Endothelial cell of umbilical vein (primary cell): ENCODE measurements at regions of chr2 and their contacts with region 1.

Region 1: GRCh38 chr2:38274286-38275276 is 102.5 kb downstream of the ATL2 start:
- DNase-seq: peak; percentile 77
- H3K4me3 ChIP-seq: no peak overlapping the region
- H3K27ac ChIP-seq: no peak overlapping the region
- H3K4me1 ChIP-seq: no peaks in the 10 kb centered on the region
- H3K27me3 ChIP-seq: no peaks in the 10 kb centered on the region
- CTCF ChIP-seq: peak; percentile 34 to 39
- POLR2A ChIP-seq: no peak

Region 2: DNA sequence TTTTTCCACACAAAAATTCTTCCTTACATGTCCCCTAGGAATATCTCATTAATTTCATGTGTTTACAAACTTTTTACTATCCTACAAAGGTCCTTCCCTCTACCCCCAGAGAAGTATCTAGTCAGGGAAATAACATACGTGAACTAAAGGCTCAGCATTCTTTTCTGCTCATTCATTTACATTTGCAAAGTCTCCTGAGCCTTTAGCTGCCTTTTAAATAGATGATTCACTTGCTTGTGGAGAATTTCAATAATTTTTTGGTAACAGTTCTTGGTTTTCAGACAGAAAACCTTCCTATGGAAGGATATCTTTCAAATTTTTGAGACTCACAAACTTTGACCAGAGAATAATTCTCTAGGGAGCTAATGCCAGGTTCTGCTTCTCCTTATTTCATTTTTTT is 431.0 kb before region 1 on chr2:
- CTCF ChIA-PET with region 1: no interaction called
- POLR2A ChIA-PET with region 1: no interaction called
- dilution Hi-C with region 1: no loop called
- intact Hi-C with region 1: no loop called
- DNase-seq: no peak
- H3K4me3 ChIP-seq: no peak overlapping the region
- H3K27ac ChIP-seq: no peak overlapping the region
- H3K4me1 ChIP-seq: no peaks in the 10 kb centered on the region
- H3K27me3 ChIP-seq: no peaks in the 10 kb centered on the region
- CTCF ChIP-seq: no peak
- POLR2A ChIP-seq: no peak

Region 3: GRCh38 chr2:37890893-37891495 is 383.6 kb before region 1 on chr2:
- CTCF ChIA-PET with region 1: interaction called, 11 read pairs
- POLR2A ChIA-PET with region 1: no interaction called
- dilution Hi-C with region 1: no loop called
- intact Hi-C with region 1: loop called (anchors 2 kb)
- DNase-seq: peak; percentile 69
- H3K4me3 ChIP-seq: no peak overlapping the region
- H3K27ac ChIP-seq: no peak overlapping the region
- H3K4me1 ChIP-seq: no peaks in the 10 kb centered on the region
- H3K27me3 ChIP-seq: no peaks in the 10 kb centered on the region
- CTCF ChIP-seq: peak; percentile 76 to 79
- POLR2A ChIP-seq: no peak

Region 4: GRCh38 chr2:37982147-37982582 is 292.4 kb before region 1 on chr2:
- CTCF ChIA-PET with region 1: interaction called, 78 read pairs
- POLR2A ChIA-PET with region 1: no interaction called
- dilution Hi-C with region 1: no loop called
- intact Hi-C with region 1: loop called (anchors 1 kb)
- DNase-seq: peak; percentile 60
- H3K4me3 ChIP-seq: no peak overlapping the region
- H3K27ac ChIP-seq: no peak overlapping the region
- H3K4me1 ChIP-seq: no peaks in the 10 kb centered on the region
- H3K27me3 ChIP-seq: no peaks in the 10 kb centered on the region
- CTCF ChIP-seq: peak; percentile 71 to 80
- POLR2A ChIP-seq: no peak

Region 5: DNA sequence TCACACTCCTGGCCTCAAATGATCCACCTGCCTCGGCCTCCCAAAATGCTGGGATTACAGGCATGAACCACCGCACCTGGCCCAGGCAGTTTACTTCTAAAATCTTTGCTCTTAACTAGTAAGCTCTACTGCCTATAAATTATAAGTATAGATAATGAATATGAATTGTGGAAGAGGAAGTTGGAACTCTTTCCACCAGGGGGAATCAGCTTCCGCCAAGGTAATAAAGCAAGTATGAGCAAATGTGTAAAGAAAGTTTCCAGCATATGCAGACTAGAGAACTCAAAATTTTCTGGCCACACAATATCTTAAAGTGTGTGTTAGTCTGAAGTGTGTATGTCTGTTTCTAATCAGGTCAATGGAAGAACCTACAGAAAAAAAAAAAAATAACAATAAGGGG is 281.4 kb before region 1 on chr2:
- CTCF ChIA-PET with region 1: interaction called, 17 read pairs
- POLR2A ChIA-PET with region 1: no interaction called
- dilution Hi-C with region 1: no loop called
- intact Hi-C with region 1: no loop called
- DNase-seq: no peak
- H3K4me3 ChIP-seq: no peak overlapping the region
- H3K27ac ChIP-seq: no peak overlapping the region
- H3K4me1 ChIP-seq: no peaks in the 10 kb centered on the region
- H3K27me3 ChIP-seq: no peaks in the 10 kb centered on the region
- CTCF ChIP-seq: no peak
- POLR2A ChIP-seq: no peak

Region 6: GRCh38 chr2:38076606-38077430 is 197.8 kb before region 1 on chr2:
- CTCF ChIA-PET with region 1: interaction called, 5 read pairs
- POLR2A ChIA-PET with region 1: no interaction called
- dilution Hi-C with region 1: no loop called
- intact Hi-C with region 1: loop called (anchors 10 kb)
- DNase-seq: no peak
- H3K4me3 ChIP-seq: peak overlapping the region; percentile 30 to 34 (median 32)
- H3K27ac ChIP-seq: no peak overlapping the region
- H3K4me1 ChIP-seq: peaks cover 16% of the 10 kb centered on the region
- H3K27me3 ChIP-seq: peaks cover 44 to 51% of the 10 kb centered on the region in 2 experiments
- CTCF ChIP-seq: peak in 1 of 2 donors; percentile 23
- POLR2A ChIP-seq: no peak

Region 7: DNA sequence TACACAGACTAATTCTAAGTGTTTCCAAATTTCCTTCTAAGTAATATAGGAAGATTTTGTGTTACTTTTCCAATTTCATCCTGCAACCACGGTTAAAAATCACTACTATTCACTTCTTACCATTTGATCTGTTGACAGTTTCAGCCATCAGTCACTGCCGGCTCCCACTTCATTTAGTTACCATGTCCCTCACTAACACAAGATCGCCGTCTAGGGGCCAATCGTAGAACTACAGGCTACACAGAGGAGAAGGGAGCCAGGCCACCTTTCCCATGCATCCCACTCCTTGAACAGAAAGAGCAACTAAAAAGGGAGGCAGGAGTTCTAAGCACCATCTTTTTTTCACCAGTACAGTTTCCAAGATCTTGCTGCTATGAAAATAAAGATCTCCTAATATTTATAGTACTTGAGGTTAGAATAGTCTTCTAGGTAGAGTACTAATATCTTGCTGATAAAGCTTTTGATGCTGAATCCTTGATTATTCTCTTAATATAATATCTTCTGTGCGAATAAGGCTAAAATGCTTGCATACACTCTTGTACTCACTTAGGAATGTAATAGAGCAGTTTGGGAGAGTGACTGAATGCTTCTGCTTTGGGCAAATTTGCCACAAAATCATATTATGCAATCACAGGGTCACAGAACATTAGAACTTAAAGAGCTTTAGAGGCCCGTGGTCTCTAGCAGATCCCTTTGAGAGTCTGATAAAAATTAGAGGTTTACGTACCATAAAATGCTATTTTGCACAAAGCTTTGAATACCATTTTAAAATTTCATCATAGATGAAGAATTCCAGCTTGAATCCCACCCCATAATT is 159.2 kb before region 1 on chr2:
- CTCF ChIA-PET with region 1: interaction called, 8 read pairs
- POLR2A ChIA-PET with region 1: no interaction called
- dilution Hi-C with region 1: no loop called
- intact Hi-C with region 1: loop called (anchors 1 kb)
- DNase-seq: peak; percentile 73
- H3K4me3 ChIP-seq: no peak overlapping the region
- H3K27ac ChIP-seq: no peak overlapping the region
- H3K4me1 ChIP-seq: no peaks in the 10 kb centered on the region
- H3K27me3 ChIP-seq: peaks cover 0 to 10% of the 10 kb centered on the region in 2 experiments
- CTCF ChIP-seq: peak; percentile 91 to 98
- POLR2A ChIP-seq: no peak

Region 8: GRCh38 chr2:38293152-38293865 is 18.7 kb after region 1 on chr2:
- CTCF ChIA-PET with region 1: interaction called, 13 read pairs
- POLR2A ChIA-PET with region 1: no interaction called
- dilution Hi-C with region 1: no loop called
- intact Hi-C with region 1: no loop called
- DNase-seq: no peak
- H3K4me3 ChIP-seq: no peak overlapping the region
- H3K27ac ChIP-seq: no peak overlapping the region
- H3K4me1 ChIP-seq: no peaks in the 10 kb centered on the region
- H3K27me3 ChIP-seq: peaks cover 0 to 2% of the 10 kb centered on the region in 2 experiments
- CTCF ChIP-seq: no peak
- POLR2A ChIP-seq: no peak